MCF 10A (cell line): ENCODE measurements at regions of chr1 and their contacts with region 1.

Region 1: DNA sequence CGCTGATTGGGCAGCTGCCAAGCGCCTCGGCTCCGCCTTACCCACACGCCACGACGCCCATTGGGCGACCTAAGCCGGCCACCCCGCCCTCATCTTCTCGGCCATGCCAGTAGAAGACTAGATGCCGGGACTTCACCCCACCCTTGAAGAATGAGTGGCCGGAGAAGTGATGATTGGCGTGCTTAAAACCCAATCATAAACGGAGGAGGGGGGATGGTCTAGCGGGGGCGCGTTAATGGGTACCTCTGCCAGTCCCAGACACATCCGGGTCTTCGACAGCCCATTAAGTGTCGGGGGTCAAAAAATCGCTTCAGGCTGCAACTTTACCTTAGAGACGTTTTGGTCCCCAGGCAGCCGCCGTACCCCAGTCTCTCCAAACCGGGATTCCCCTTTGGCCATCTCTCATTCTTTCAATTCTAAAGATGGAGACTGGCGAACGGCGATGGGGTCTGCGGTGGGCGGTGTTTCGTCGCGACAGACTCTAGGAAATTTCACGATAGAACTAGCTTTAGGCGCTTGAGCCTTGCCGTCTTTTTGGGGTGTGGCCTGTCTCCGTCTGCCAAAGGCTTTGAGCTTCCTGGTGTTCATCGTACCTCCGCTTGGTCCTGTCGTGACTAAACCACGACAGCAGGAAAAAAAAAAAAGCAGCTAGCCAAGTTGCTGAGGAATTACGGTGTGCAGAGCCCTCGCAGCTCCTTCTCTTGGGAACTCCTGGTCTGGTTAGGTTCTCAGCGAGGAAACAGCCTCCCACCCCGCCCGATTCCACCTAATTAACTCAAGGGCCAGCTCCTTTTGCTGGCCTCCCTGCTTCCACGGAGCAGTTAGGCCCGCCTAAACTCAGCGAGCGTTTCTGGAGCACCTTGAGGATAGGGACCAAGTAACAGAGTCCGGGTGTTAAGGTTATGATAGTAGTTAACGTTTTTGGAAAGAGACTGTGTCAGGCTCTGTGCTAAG is at the start of gene GATAD2B:
- DNase-seq: peak; percentile 100
- H3K4me3 Mint-ChIP-seq: peak within 1 kb of the TSS; percentile 74
- H3K27ac Mint-ChIP-seq: peak within 1 kb of the TSS; percentile 74
- H3K4me1 Mint-ChIP-seq: peaks cover 34% of the 10 kb centered on the region
- H3K27me3 Mint-ChIP-seq: no peaks in the 10 kb centered on the region
- CTCF ChIP-seq: no peak
- total RNA-seq, gene GATAD2B: 95.5 and 108 TPM in 2 replicates

Region 2: DNA sequence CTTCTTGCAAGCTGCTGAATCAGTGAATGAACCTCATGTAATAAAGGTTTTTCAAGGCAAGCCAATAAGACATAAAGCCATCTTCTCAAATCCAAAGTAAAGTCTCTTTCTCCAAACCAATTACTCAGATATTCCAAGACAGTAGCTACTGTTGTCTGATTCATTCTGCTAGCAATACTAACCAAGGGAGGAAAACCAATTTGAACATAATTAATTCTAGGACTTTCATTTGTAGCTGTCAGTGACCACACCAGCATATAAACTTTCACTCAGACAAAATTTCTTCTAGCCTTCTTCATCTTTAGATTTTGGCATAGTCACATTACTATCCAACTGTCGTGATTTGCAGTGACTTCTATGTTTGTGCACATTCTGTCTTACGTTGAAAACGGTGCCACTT is 205.9 kb before region 1 on chr1:
- CTCF ChIA-PET with region 1: no interaction called
- POLR2A ChIA-PET with region 1: no interaction called
- intact Hi-C with region 1: no loop called
- DNase-seq: no peak
- H3K4me3 Mint-ChIP-seq: no peak overlapping the region
- H3K27ac Mint-ChIP-seq: no peak overlapping the region
- H3K4me1 Mint-ChIP-seq: no peaks in the 10 kb centered on the region
- H3K27me3 Mint-ChIP-seq: no peaks in the 10 kb centered on the region
- CTCF ChIP-seq: no peak

Region 3: GRCh38 chr1:153727463-153728304 is 195.6 kb before region 1 on chr1 and contains the start of gene INTS3:
- CTCF ChIA-PET with region 1: no interaction called
- POLR2A ChIA-PET with region 1: interaction called, 12 read pairs
- intact Hi-C with region 1: no loop called
- DNase-seq: peak; percentile 100
- H3K4me3 Mint-ChIP-seq: peak within 1 kb of the TSS; percentile 99
- H3K27ac Mint-ChIP-seq: peak within 1 kb of the TSS; percentile 98
- H3K4me1 Mint-ChIP-seq: peaks cover 21% of the 10 kb centered on the region
- H3K27me3 Mint-ChIP-seq: no peaks in the 10 kb centered on the region
- CTCF ChIP-seq: no peak
- total RNA-seq, gene INTS3: 68.7 and 88.3 TPM in 2 replicates

Region 4: DNA sequence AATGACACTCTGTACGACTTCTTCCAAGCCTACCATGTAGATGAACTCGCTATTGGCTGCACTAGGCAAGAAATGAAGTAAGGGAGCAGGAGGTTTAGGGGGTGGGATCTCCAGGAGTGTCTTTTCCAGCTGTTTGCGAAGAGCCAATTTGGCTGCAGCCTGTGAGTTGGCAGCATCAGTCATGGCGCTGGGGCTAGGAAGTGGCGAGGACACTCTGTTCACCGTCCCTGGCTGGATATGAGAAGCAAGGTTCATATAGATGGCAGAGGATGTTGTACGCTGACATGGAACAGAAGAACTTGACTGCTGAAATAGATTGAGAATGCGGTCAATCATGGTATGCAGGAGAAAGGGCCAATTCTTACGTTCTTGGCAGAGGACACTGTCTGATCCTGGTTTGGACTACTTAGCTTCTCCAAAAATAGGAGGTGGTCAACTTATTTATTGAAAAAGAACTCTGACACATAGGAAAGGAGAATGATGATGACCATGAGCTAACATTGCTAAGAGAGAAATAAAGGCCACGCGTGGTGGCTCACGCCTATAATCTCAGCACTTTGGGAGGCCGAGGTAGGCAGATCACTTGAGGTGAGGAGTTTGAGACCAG is 106.9 kb before region 1 on chr1:
- CTCF ChIA-PET with region 1: interaction called, 11 read pairs
- POLR2A ChIA-PET with region 1: interaction called, 14 read pairs
- intact Hi-C with region 1: loop called (anchors 1 kb)
- DNase-seq: no peak
- H3K4me3 Mint-ChIP-seq: no peak overlapping the region
- H3K27ac Mint-ChIP-seq: peak overlapping the region; percentile 2
- H3K4me1 Mint-ChIP-seq: no peaks in the 10 kb centered on the region
- H3K27me3 Mint-ChIP-seq: no peaks in the 10 kb centered on the region
- CTCF ChIP-seq: no peak

Region 5: DNA sequence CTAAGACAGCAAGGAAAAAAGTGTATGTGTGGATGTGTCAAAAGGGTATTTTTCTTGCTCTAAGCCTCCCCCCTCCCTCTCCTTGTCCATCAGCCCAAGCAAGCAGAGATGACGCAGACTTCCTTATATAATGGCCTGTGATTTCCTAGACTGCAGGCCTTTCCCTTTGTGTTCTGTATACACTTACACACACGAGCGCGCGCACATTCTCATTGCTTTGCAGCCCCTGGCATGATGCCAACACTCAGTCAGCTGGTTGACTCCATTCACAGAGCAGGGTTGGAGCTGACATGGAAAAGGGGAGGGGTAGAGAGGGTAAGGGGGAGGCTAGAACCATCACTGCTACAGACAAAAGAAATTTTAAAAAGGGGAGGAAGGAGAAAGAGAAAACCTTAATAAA is 42.3 kb before region 1 on chr1:
- CTCF ChIA-PET with region 1: interaction called, 5 read pairs
- POLR2A ChIA-PET with region 1: interaction called, 10 read pairs
- intact Hi-C with region 1: no loop called
- DNase-seq: peak; percentile 85
- H3K4me3 Mint-ChIP-seq: no peak overlapping the region
- H3K27ac Mint-ChIP-seq: no peak overlapping the region
- H3K4me1 Mint-ChIP-seq: peaks cover 3% of the 10 kb centered on the region
- H3K27me3 Mint-ChIP-seq: no peaks in the 10 kb centered on the region
- CTCF ChIP-seq: no peak

Region 6: DNA sequence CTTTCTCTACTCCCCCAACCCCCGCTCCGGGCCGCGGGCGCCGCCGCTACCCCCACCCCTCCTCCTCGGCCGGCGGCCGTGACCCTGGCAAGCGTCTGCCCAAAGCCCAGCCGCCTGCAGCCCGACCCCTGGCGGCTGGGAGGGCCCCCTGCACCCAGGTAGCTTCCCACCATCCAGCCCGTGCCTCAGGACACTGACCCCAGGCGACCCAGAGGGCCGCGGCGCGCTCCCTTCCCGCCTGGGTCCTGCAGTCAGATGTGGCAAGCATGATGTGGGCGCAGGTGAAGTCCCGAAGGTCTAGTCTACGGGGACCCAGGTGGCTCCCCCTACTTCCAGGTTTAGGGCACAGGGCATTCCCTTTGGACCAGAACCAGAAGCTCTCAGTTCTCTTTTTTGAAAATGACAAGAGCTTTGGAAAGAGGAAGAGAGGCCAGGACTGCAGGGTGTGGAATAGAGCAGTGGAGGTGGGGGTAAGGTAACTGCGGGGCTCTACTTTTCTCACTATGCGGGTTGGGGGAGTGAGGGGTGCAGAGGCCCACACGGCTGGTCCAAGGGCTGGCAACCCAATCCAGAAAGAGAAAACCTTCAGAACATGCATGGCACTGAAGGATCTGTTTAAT is 23.5 kb after region 1 on chr1 and contains the start of gene DENND4B:
- CTCF ChIA-PET with region 1: interaction called, 10 read pairs
- POLR2A ChIA-PET with region 1: interaction called, 117 read pairs
- intact Hi-C with region 1: loop called (anchors 1 kb)
- DNase-seq: peak; percentile 88
- H3K4me3 Mint-ChIP-seq: peak within 1 kb of the TSS; percentile 90
- H3K27ac Mint-ChIP-seq: peak within 1 kb of the TSS; percentile 88
- H3K4me1 Mint-ChIP-seq: peaks cover 21% of the 10 kb centered on the region
- H3K27me3 Mint-ChIP-seq: no peaks in the 10 kb centered on the region
- CTCF ChIP-seq: peak; percentile 98
- total RNA-seq, gene DENND4B: 59.6 and 79.1 TPM in 2 replicates

Region 7: DNA sequence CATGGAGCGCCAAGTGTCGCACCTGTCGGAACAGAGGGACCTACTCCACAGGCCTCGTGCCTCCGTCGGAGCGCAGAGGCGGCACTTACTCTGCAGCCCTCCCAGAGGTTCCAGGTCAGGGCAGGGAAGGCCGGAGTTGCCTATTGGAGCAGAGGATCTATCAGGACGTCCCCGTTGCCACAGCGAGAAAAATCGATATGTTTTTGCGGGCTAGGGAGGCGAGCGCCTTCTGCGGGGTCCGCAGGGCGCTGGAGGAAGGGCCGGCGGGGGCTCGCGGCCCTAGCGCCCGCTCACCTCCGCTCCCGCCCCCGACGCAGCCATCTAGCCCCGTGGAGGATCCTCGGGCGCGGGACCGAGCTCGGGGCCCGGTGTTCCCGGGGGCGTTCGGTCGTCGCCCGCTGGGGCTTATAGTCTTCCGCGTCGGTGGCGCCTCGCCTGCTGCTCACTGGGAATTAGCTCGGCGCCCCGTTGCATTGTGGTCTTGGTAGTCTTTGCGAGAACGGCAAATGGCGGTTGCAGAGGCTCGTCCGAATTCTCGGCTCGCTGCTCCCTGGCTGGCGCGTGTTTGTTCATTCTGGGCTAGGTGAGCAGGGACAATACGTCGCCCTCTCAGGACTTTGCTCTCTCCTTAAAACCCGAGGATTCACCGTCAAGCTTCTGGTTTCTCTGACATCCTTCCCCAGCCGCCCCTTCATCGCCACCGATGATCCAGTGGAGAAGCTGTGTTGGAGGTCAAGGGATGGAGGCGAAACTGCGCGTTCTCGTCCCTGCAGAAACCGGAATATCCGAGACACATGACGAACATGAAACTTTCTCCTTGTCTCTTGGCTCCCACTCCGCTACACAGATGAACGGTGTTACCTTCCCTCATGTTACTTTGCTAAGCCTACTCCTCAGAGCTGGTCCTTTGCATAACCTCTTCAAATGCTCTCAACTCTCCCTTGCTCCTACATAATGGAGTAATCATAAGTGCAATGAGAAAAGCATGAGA is 54.3 kb after region 1 on chr1 and contains the start of gene JTB:
- CTCF ChIA-PET with region 1: interaction called, 3 read pairs
- POLR2A ChIA-PET with region 1: interaction called, 57 read pairs
- intact Hi-C with region 1: no loop called
- DNase-seq: peak; percentile 93
- H3K4me3 Mint-ChIP-seq: peak within 1 kb of the TSS; percentile 98
- H3K27ac Mint-ChIP-seq: peak within 1 kb of the TSS; percentile 96
- H3K4me1 Mint-ChIP-seq: peaks cover 23% of the 10 kb centered on the region
- H3K27me3 Mint-ChIP-seq: no peaks in the 10 kb centered on the region
- CTCF ChIP-seq: no peak
- total RNA-seq, gene JTB: 194 and 224 TPM in 2 replicates